ENCODE measurements at regions of chr2 and their contacts with region 1.

Region 1: DNA sequence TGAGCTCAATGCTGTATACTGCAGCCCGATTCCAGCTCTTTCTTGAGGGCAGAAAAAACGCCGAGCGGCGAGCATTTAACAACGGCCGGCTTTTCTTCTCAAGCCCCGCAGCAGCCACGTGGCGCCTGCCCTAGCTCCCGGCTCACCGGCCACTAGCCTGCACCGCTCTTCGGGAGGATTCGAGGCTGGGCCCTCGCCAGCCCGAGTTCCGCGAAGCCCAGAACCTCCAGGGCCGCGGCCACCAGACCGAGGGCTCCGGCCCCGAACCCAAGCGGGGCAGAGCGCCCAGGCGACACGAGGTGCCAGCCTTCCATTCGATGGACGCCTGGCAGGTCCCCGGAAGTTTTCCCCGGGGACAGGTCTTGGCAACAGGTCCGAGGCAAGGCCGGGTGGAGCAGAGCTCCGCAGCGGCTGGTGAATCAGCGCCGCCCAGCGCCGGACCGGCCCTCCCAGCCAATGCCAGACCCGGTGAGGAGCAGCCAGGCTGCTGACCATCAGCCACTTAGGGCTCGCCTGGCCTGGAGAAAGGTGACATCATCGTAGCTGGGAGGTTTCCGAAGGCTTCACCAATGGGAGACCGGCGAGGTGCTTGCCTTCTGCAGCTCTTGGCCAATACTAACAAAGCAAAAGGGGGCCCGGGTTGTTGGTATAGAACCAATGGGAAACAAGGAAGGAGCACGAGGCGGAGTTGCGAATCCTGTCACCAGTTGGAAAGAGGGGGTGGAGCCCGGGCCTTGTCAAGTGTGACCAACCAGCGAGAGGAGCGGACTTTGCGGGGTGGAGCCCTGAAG is 544 bp upstream of the MXD1 start:
- DNase-seq: peak; percentile 100
- H3K4me3 Mint-ChIP-seq: peak overlapping the region; percentile 82
- H3K27ac Mint-ChIP-seq: peak overlapping the region; percentile 81
- H3K4me1 Mint-ChIP-seq: peaks cover 43% of the 10 kb centered on the region
- H3K27me3 Mint-ChIP-seq: no peaks in the 10 kb centered on the region

Region 2: GRCh38 chr2:69893684-69894551 is 20.4 kb before region 1 on chr2 and contains the start of gene SNRNP27:
- CTCF ChIA-PET with region 1: interaction called, 3 read pairs
- POLR2A ChIA-PET with region 1: interaction called, 39 read pairs
- DNase-seq: peak; percentile 84
- H3K4me3 Mint-ChIP-seq: peak within 1 kb of the TSS; percentile 96
- H3K27ac Mint-ChIP-seq: peak within 1 kb of the TSS; percentile 94
- H3K4me1 Mint-ChIP-seq: peaks cover 44% of the 10 kb centered on the region
- H3K27me3 Mint-ChIP-seq: no peaks in the 10 kb centered on the region
- total RNA-seq, gene SNRNP27: 59.3 to 63.3 TPM

Region 3: DNA sequence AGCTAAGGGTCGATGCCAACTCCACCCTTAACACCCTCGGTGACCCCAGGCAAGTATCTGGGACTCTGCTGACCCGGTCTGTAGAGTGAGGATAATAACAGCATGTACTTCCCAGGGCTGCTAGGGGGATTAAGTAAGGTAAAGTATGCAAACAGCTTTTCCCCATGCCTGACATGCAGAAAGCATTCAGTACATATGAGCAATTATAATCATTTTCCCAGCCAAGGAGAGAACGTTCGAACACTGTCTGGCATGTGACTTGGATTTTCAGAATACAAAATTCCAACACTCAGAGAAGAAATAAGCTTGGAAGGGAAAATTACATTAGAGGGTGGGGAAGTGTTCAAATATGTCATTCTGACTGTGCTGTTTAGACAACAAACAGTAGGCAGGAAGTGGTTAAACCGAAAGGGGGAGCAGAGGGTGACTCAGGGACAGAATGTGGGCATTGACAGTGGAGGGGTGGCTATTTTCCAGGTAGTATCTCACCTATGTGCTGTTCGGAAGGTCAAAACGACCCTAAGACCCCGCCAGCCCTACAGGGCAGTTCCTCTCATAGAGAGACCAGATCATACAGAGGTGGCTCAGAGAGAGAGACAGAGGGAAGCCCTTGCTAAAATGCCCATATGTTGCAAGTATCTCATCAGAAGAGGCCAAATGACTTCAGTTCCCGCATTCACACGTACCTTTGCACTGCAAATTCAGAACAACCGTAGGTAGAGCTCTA is 32.1 kb after region 1 on chr2:
- CTCF ChIA-PET with region 1: interaction called, 10 read pairs
- POLR2A ChIA-PET with region 1: interaction called, 83 read pairs
- DNase-seq: peak; percentile 80
- H3K4me3 Mint-ChIP-seq: peak overlapping the region; percentile 12
- H3K27ac Mint-ChIP-seq: peak overlapping the region; percentile 94
- H3K4me1 Mint-ChIP-seq: peaks cover 56% of the 10 kb centered on the region
- H3K27me3 Mint-ChIP-seq: peaks cover 2% of the 10 kb centered on the region

Region 4: GRCh38 chr2:70070541-70071268 is 156.3 kb after region 1 on chr2:
- CTCF ChIA-PET with region 1: interaction called, 251 read pairs
- POLR2A ChIA-PET with region 1: interaction called, 228 read pairs
- DNase-seq: peak; percentile 70
- H3K4me3 Mint-ChIP-seq: peak overlapping the region; percentile 63
- H3K27ac Mint-ChIP-seq: peak overlapping the region; percentile 88
- H3K4me1 Mint-ChIP-seq: peaks cover 47% of the 10 kb centered on the region
- H3K27me3 Mint-ChIP-seq: no peaks in the 10 kb centered on the region

Region 5: GRCh38 chr2:70094978-70095719 is 180.8 kb after region 1 on chr2:
- CTCF ChIA-PET with region 1: interaction called, 4 read pairs
- POLR2A ChIA-PET with region 1: interaction called, 287 read pairs
- DNase-seq: peak; percentile 68
- H3K4me3 Mint-ChIP-seq: peak overlapping the region; percentile 68
- H3K27ac Mint-ChIP-seq: peak overlapping the region; percentile 87
- H3K4me1 Mint-ChIP-seq: peaks cover 54% of the 10 kb centered on the region
- H3K27me3 Mint-ChIP-seq: no peaks in the 10 kb centered on the region

Region 6: DNA sequence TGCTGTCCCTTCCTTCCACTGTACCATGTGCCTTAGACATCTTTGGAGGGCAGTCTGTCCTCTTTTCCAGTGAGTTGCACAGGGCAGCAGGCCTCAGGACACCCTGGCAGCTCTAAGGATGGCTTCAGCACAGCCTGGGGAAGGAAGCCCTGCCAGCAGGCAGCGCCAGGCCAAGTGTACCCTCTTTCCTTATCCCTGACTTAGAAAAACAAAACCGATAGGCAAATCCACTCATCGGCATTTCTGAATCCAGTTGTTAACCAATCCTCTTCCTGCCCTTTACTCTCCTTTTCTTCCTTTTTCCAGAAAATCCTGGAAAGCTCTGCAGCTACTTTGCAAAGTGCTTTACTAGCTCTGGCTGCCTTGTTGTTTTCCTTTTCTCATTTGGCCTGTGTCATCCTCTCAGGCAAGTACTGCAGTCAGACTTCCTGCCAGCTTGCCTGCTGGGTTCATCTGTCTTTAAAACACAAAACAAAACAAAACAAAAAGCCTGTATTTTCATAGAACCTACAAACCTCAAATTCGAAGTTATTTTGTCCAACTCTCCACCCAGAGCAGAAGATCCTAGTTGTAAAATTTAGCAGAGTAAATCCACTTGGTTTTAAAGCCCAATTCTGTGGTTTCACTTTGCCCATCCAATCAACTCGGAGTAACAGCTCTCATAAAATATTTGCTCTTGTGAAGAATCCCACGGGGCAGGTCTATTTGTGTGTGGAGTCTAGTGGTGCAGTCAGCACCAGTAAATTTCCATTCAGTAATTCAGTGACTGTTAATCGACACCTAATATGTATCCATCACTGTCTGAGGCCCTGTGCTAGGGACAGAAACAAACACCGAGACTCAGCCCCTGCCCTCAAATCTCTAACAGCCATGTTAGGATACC is 218.1 kb after region 1 on chr2:
- CTCF ChIA-PET with region 1: interaction called, 26 read pairs
- POLR2A ChIA-PET with region 1: interaction called, 121 read pairs
- DNase-seq: peak; percentile 53
- H3K4me3 Mint-ChIP-seq: peak overlapping the region; percentile 72
- H3K27ac Mint-ChIP-seq: peak overlapping the region; percentile 94
- H3K4me1 Mint-ChIP-seq: peaks cover 76% of the 10 kb centered on the region
- H3K27me3 Mint-ChIP-seq: no peaks in the 10 kb centered on the region

Region 7: DNA sequence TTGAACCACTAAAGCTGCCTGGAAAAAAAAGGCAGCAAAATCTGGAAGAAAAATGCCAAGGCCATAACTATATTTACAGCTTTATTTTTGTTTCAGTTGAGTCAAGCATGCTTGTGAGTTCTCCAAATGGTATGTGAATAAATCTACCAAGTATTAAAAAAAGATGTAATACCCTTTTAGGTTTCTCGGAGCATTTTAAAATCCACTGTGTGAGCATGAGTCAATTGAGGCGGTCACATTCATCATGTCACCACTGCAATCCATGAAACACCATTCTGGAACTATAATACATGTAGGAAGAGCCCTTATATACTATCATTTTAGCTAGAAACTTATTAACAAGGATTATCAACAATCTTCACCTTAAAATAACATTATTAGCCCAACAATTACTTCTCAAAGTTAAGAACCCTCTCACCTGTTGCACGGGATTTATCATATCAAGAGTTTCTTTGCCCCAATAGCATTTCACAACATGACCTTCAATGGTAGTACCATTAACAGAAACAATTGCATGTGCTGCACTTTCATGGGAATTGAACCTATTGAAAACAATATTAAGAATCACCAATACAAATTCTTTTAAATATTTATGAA is 300.7 kb after region 1 on chr2:
- CTCF ChIA-PET with region 1: no interaction called
- POLR2A ChIA-PET with region 1: no interaction called
- DNase-seq: no peak
- H3K4me3 Mint-ChIP-seq: no peak overlapping the region
- H3K27ac Mint-ChIP-seq: no peak overlapping the region
- H3K4me1 Mint-ChIP-seq: peaks cover 22% of the 10 kb centered on the region
- H3K27me3 Mint-ChIP-seq: no peaks in the 10 kb centered on the region

Region 8: GRCh38 chr2:70258532-70258874 is 344.1 kb after region 1 on chr2:
- CTCF ChIA-PET with region 1: interaction called, 4 read pairs
- POLR2A ChIA-PET with region 1: interaction called, 20 read pairs
- DNase-seq: no peak
- H3K4me3 Mint-ChIP-seq: peak overlapping the region; percentile 82
- H3K27ac Mint-ChIP-seq: peak overlapping the region; percentile 58
- H3K4me1 Mint-ChIP-seq: peaks cover 24% of the 10 kb centered on the region
- H3K27me3 Mint-ChIP-seq: no peaks in the 10 kb centered on the region

Measured in activated CD4-positive, alpha-beta memory T cell treated with anti-CD3 and anti-CD28 coated beads, Interleukin-2, amount 10 ng/mL, durations not matched to agents 7 days and 5 days (primary cell).